Activated B cell treated with CpG ODN at 0.5 μM for 24 hours (primary cell): ENCODE measurements at regions of chr5 and their contacts with region 1.

Region 1: DNA sequence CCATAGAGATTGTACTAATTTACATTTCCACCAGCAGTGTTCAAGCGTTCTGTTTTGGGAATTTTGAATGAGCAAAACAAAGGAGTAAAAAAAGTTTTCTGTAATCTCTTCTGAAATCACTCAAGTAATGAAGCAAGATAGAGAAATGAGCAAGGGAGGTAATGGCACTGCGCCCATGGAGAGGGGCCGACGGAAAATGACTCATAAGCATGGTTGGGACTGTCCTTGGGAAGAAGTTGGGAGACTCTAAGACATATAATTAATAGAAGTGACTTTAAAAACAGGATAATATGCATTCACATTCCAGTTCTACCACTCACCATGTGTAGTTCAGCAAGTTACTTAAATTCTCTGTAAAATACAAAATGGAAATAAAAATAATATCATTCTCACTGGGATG is 62.5 kb upstream of the C5orf46 start:
- DNase-seq: no peak
- ATAC-seq: no peak
- H3K4me3 Mint-ChIP-seq: no peak overlapping the region
- H3K27ac Mint-ChIP-seq: no peak overlapping the region
- H3K4me1 Mint-ChIP-seq: no peaks in the 10 kb centered on the region
- H3K27me3 Mint-ChIP-seq: peaks cover 11% of the 10 kb centered on the region
- CTCF ChIP-seq: no peak

Region 2: DNA sequence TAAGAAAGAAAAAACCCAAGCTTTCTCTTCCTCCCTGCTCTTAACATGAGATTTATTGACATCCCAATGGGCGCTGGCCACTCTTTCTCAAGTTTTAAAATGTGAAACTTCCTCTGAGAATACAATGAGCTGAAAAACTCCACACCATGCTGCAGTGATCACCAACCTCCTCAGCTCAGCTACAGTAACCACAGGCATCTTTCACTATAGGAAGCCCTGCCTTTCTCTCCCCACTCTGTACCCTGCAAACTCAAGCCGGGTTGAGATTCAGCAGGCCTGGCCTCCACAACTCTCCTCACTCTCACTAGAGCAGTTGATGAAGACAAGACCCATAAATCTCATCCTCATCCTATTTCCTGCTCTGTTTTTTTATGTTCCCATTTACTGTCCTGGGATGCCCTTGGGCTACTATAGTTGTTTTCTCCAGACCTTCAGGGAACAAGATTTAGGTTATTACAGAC is 1045.7 kb after region 1 on chr5:
- CTCF ChIA-PET with region 1: no interaction called
- POLR2A ChIA-PET with region 1: interaction called, 10 read pairs
- intact Hi-C with region 1: no loop called
- DNase-seq: no peak
- ATAC-seq: no peak
- H3K4me3 Mint-ChIP-seq: no peak overlapping the region
- H3K27ac Mint-ChIP-seq: no peak overlapping the region
- H3K4me1 Mint-ChIP-seq: no peaks in the 10 kb centered on the region
- H3K27me3 Mint-ChIP-seq: peaks cover 9% of the 10 kb centered on the region
- CTCF ChIP-seq: no peak